Activated CD4-positive, alpha-beta T cell treated with anti-CD3 and anti-CD28 coated beads, Interleukin-2, amount 10 ng/mL, durations not matched to agents 24 days and 14 days (primary cell): ENCODE measurements at regions of chr14 and their contacts with region 1.

Region 1: GRCh38 chr14:59275653-59276052 is 87.2 kb downstream of the DAAM1 start:
- DNase-seq: no peak
- H3K4me3 Mint-ChIP-seq: no peak overlapping the region
- H3K27ac Mint-ChIP-seq: peak overlapping the region; percentile 47
- H3K4me1 Mint-ChIP-seq: peaks cover 19% of the 10 kb centered on the region
- H3K27me3 Mint-ChIP-seq: peaks cover 2% of the 10 kb centered on the region

Region 2: GRCh38 chr14:59189786-59190771 is 85.6 kb before region 1 on chr14:
- intact Hi-C with region 1: loop called (anchors 1 kb)
- DNase-seq: peak; percentile 94
- H3K4me3 Mint-ChIP-seq: peak overlapping the region; percentile 98
- H3K27ac Mint-ChIP-seq: peak overlapping the region; percentile 73
- H3K4me1 Mint-ChIP-seq: peaks cover 16% of the 10 kb centered on the region
- H3K27me3 Mint-ChIP-seq: peaks cover 19% of the 10 kb centered on the region

Region 3: GRCh38 chr14:59320763-59321640 is 45.3 kb after region 1 on chr14:
- intact Hi-C with region 1: loop called (anchors 2 kb)
- DNase-seq: no peak
- H3K4me3 Mint-ChIP-seq: no peak overlapping the region
- H3K27ac Mint-ChIP-seq: no peak overlapping the region
- H3K4me1 Mint-ChIP-seq: peaks cover 8% of the 10 kb centered on the region
- H3K27me3 Mint-ChIP-seq: no peaks in the 10 kb centered on the region